ENCODE measurements at regions of chr5 and their contacts with region 1.

Region 1: DNA sequence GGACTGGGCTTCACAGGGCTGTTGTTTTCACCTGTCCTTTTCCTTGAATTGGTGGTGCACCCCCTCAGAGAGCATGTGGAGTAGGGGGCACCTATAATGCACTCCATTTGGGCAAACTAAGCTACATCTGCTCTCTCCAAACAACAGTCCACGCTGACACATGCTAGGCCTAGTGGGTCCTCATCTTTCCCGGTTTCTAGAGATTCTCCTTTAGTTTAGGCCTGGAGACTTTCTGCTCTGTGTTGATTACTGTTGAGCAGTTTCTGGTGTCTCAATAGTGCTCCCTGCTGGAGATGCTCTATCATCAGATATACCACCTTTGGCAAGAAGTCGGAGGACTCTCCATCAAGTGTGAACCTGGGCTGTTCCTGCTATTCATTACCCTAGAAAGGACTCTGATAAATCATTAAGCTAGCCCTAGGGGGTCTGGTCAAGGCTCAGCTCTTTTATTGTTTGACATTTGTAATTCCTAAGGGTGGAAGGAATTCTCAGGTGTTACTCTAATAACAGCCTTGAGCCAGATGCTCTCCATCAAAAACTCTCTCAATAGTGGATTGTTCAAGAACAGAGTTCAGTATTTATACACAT is 64.0 kb upstream of the FYB1 start:
- DNase-seq: peak; percentile 70
- ATAC-seq: peak; percentile 99
- H3K4me3 Mint-ChIP-seq: no peak overlapping the region
- H3K27ac Mint-ChIP-seq: peak overlapping the region; percentile 73
- H3K4me1 Mint-ChIP-seq: peaks cover 29% of the 10 kb centered on the region
- H3K27me3 Mint-ChIP-seq: peaks cover 5% of the 10 kb centered on the region
- CTCF ChIP-seq: peak; percentile 78

Region 2: DNA sequence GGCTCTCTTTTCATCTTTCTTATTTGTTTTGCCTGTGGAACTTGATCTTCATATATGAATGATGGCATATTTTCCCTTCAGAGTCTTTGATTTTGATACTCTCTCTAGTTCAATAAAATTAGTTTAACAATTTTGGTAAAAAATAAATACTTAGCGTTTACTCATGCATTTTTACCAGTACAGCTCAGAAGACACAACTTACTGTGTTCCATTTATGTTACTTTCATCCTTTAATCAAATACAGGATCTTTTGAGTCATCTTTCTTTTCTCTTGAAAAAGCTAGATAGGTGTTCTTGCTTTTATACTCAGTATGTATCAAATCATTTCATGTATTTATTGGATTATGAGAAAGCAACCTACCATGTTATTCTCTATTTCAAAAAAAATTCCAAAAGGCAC is 162.0 kb before region 1 on chr5:
- CTCF ChIA-PET with region 1: no interaction called
- POLR2A ChIA-PET with region 1: no interaction called
- intact Hi-C with region 1: no loop called
- DNase-seq: no peak
- ATAC-seq: no peak
- H3K4me3 Mint-ChIP-seq: no peak overlapping the region
- H3K27ac Mint-ChIP-seq: peak overlapping the region; percentile 59
- H3K4me1 Mint-ChIP-seq: peaks cover 47% of the 10 kb centered on the region
- H3K27me3 Mint-ChIP-seq: no peaks in the 10 kb centered on the region
- CTCF ChIP-seq: no peak

Region 3: DNA sequence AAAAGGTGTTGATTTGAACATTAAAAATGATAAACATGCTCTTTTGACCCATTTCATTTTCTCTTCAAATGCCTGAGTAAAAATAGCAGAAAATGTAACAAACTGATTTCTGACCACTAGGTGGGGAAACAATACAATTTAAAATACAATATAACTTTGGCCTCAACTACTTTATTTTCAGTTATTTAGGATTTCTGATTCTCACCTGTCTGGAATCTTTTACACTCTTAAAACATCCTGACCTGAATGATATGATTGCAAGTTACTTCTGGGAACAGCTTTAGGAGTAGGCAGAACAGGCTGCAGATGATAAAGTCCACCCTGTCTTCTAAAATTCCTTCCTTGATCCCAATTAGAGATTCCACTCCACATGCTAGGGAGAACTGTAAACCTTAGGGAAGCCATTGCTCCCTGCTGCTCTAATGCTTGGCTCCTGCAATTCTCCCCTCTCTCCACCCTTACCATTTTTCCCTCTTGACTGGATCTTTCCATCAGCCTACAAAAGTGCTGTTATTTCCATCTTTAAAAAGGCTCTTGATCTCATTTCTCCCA is 134.3 kb before region 1 on chr5:
- CTCF ChIA-PET with region 1: interaction called, 18 read pairs
- POLR2A ChIA-PET with region 1: interaction called, 3 read pairs
- intact Hi-C with region 1: loop called (anchors 1 kb)
- DNase-seq: no peak
- ATAC-seq: peak; percentile 45
- H3K4me3 Mint-ChIP-seq: no peak overlapping the region
- H3K27ac Mint-ChIP-seq: peak overlapping the region; percentile 90
- H3K4me1 Mint-ChIP-seq: peaks cover 68% of the 10 kb centered on the region
- H3K27me3 Mint-ChIP-seq: no peaks in the 10 kb centered on the region
- CTCF ChIP-seq: peak; percentile 62

Region 4: GRCh38 chr5:39187831-39188731 is 95.2 kb before region 1 on chr5:
- CTCF ChIA-PET with region 1: interaction called, 11 read pairs
- POLR2A ChIA-PET with region 1: interaction called, 6 read pairs
- intact Hi-C with region 1: no loop called
- DNase-seq: peak; percentile 51
- ATAC-seq: peak; percentile 44
- H3K4me3 Mint-ChIP-seq: peak overlapping the region; percentile 72
- H3K27ac Mint-ChIP-seq: peak overlapping the region; percentile 96
- H3K4me1 Mint-ChIP-seq: peaks cover 84% of the 10 kb centered on the region
- H3K27me3 Mint-ChIP-seq: no peaks in the 10 kb centered on the region
- CTCF ChIP-seq: no peak

Region 5: GRCh38 chr5:39202597-39203274 is 80.6 kb before region 1 on chr5:
- CTCF ChIA-PET with region 1: interaction called, 50 read pairs
- POLR2A ChIA-PET with region 1: interaction called, 11 read pairs
- intact Hi-C with region 1: no loop called
- DNase-seq: peak; percentile 58
- ATAC-seq: peak; percentile 23
- H3K4me3 Mint-ChIP-seq: peak overlapping the region; percentile 92
- H3K27ac Mint-ChIP-seq: peak overlapping the region; percentile 97
- H3K4me1 Mint-ChIP-seq: peaks cover 36% of the 10 kb centered on the region
- H3K27me3 Mint-ChIP-seq: no peaks in the 10 kb centered on the region
- CTCF ChIP-seq: no peak

Region 6: GRCh38 chr5:39231705-39232525 is 51.4 kb before region 1 on chr5:
- CTCF ChIA-PET with region 1: interaction called, 317 read pairs
- POLR2A ChIA-PET with region 1: interaction called, 5 read pairs
- intact Hi-C with region 1: no loop called
- DNase-seq: peak; percentile 81
- ATAC-seq: peak; percentile 95
- H3K4me3 Mint-ChIP-seq: peak overlapping the region; percentile 52
- H3K27ac Mint-ChIP-seq: peak overlapping the region; percentile 92
- H3K4me1 Mint-ChIP-seq: peaks cover 21% of the 10 kb centered on the region
- H3K27me3 Mint-ChIP-seq: no peaks in the 10 kb centered on the region
- CTCF ChIP-seq: no peak

Region 7: GRCh38 chr5:39264528-39264927 is 18.8 kb before region 1 on chr5:
- CTCF ChIA-PET with region 1: interaction called, 20 read pairs
- POLR2A ChIA-PET with region 1: interaction called, 4 read pairs
- intact Hi-C with region 1: no loop called
- DNase-seq: peak; percentile 55
- ATAC-seq: peak; percentile 89
- H3K4me3 Mint-ChIP-seq: peak overlapping the region; percentile 35
- H3K27ac Mint-ChIP-seq: peak overlapping the region; percentile 71
- H3K4me1 Mint-ChIP-seq: peaks cover 18% of the 10 kb centered on the region
- H3K27me3 Mint-ChIP-seq: no peaks in the 10 kb centered on the region
- CTCF ChIP-seq: no peak